ENCODE measurements at regions of chr7 and their contacts with region 1.

Region 1: GRCh38 chr7:139505563-139505962 is 17.9 kb upstream of the CLEC2L start:
- DNase-seq: no peak
- H3K4me3 ChIP-seq: no peak overlapping the region
- H3K27ac ChIP-seq: no peak overlapping the region
- H3K27me3 ChIP-seq: no peaks in the 10 kb centered on the region
- CTCF ChIP-seq: peak in 12 of 56 donors; percentile 9 to 37 (median 16)

Region 2: GRCh38 chr7:139471740-139472353 is 33.7 kb before region 1 on chr7:
- intact Hi-C with region 1: no loop called
- DNase-seq: no peak
- H3K4me3 ChIP-seq: no peak overlapping the region
- H3K27ac ChIP-seq: no peak overlapping the region
- H3K27me3 ChIP-seq: no peaks in the 10 kb centered on the region
- CTCF ChIP-seq: no peak

Region 3: DNA sequence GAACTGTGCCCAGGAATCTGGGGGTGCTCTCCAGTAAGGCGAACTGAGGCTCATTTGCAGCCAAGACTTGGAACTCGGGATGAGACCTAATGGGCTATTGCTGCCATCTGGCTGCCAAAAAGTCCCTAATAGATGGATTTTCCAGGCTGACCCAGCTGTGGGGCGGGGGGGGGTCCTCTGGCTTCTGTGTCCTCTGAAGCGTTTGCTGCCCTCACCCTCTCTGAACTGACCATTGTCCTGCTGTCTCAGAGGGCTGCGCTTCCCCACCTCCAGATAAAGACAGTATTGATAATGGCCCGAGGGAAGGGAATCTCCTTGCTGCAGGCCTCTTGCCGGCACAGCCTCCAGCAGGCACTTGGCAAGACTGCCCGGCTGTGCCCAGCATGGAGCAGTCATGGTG is 64.6 kb after region 1 on chr7:
- intact Hi-C with region 1: loop called (anchors 2 to 5 kb)
- DNase-seq: peak in 9 of 10 donors; percentile 65 to 89 (median 73)
- H3K4me3 ChIP-seq: no peak overlapping the region
- H3K27ac ChIP-seq: peak overlapping the region in 43 of 59 donors; percentile 2 to 79 (median 56)
- H3K27me3 ChIP-seq: no peaks in the 10 kb centered on the region
- CTCF ChIP-seq: peak in 53 of 56 donors; percentile 9 to 76 (median 54)

Region 4: DNA sequence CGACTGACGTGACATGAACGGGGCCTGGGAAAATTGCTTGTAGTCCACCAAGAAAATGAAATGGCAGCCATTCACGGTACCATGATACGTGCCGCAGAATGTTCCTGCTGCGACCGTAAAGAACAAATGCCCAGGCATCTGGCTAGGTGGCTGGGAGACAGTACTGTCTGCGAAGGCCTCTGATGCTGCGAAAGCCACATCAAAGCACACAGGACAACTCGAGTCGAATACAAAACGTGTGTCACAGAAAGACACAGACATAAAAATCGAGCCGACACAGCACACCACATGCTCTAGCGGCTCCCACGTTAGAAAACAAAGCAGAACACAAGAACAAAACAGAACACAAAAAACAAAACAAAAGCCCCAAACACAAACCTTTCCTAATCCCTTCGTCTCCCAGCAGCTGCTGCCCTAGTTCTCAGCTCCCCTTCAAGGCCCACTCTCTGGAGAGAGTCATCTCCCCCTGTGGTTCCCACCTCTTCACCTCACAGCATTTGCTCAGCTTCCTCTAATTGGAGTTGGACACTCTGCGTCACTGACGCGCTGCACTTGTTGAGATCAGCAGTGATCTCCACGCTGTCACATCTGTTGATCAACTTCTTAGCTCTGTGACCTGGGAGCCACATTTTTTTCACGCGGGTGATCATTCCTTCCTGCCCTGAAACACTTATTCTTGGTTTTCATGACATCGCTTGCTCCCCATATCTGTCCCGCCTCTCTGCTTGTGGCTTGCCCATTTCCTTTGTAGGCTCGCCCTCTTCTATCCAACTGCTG is 130.2 kb after region 1 on chr7:
- intact Hi-C with region 1: loop called in 1 of 2 experiments (anchors 10 kb)
- DNase-seq: no peak
- H3K4me3 ChIP-seq: no peak overlapping the region
- H3K27ac ChIP-seq: peak overlapping the region; percentile 5 to 98 (median 80)
- H3K27me3 ChIP-seq: no peaks in the 10 kb centered on the region
- CTCF ChIP-seq: peak in 1 of 56 donors; percentile 14

Region 5: DNA sequence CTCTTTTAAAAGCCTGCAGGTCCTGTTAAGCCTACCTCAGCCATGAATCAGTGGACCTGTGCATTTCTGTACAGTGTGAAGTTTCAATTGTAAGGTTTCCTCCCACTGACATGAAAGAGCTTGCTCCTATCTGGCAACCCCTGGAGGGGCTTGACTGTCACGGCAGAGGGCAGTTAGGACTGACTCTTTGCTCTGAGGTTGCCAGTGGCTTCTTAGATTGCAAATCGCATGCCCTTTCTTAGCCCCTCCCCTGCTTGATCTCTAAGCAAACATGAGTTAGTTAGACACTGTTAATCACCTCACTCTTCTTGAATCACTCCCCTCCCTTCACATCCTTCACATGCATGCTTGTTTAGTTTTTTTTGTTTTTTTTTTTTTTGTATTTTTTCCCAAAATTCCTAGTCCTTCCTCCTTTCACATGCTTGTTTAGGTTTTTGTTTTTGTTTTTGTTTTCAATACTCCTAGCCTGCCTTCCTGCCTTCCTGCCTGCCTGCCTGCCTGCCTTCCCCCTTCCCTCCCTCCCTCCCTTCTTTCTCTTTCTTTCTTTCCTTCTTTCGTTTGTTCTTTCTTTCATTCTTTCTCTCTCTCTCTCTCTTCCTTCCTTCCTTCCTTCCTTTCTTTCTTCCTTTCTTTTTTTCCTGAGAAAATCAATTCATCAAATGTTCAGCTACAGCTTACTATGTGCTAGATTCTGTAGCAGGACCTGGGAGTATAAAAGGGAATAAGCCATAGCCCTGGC is 278.3 kb after region 1 on chr7:
- intact Hi-C with region 1: loop called in 1 of 2 experiments (anchors 10 kb)
- DNase-seq: no peak
- H3K4me3 ChIP-seq: peak overlapping the region in 1 of 59 donors; percentile 13
- H3K27ac ChIP-seq: no peak overlapping the region
- H3K27me3 ChIP-seq: no peaks in the 10 kb centered on the region
- CTCF ChIP-seq: no peak

Measured in dorsolateral prefrontal cortex (tissue), 120 donors.